PC-9 (cell line): ENCODE measurements at regions of chr2 and their contacts with region 1.

Region 1: DNA sequence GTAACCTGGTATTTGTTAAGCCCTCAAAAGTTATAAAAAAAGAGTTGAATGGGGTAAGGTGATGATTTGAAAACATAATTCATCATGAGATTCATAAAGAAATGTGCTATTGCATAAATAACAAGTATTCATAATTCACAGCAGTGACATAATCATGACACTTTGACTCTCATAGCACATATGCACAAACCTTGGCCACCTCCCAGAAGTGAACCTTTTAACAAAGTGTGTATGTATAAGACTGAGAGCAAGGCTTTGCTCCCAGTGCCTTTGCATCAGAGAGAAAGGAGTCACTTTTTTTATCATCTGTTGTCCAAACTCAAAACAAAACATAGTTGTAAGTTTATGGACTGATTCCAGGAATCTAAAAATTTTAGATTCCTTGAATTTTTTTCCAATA is 15.0 kb upstream of the HTR2B start:
- DNase-seq: no peak
- H3K4me3 ChIP-seq: no peak overlapping the region
- H3K27ac ChIP-seq: no peak overlapping the region
- H3K4me1 ChIP-seq: no peaks in the 10 kb centered on the region
- H3K27me3 ChIP-seq: no peaks in the 10 kb centered on the region
- CTCF ChIP-seq: no peak

Region 2: DNA sequence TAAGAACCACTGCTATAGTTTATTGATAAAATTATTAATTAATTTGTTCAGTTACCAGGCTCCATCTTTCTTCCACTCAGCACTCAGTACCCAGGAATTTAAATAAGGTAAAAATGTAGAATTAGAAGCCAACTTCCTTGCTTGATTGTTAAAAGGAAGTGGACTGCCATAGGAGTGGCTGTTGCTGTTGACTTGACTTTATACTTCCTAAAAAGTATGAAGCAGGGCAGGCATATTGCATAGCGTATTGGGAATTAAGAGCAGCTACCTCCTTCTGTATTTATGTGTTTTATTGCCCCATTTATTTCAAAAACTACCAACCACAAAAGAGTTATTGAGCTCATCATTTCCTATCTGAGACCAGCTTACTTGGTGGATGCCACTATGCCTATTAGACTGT is 55.2 kb before region 1 on chr2:
- CTCF ChIA-PET with region 1: no interaction called
- POLR2A ChIA-PET with region 1: no interaction called
- intact Hi-C with region 1: no loop called
- DNase-seq: no peak
- H3K4me3 ChIP-seq: no peak overlapping the region
- H3K27ac ChIP-seq: no peak overlapping the region
- H3K4me1 ChIP-seq: no peaks in the 10 kb centered on the region
- H3K27me3 ChIP-seq: no peaks in the 10 kb centered on the region
- CTCF ChIP-seq: no peak

Region 3: GRCh38 chr2:231152800-231153557 is 13.2 kb after region 1 on chr2:
- CTCF ChIA-PET with region 1: interaction called, 13 read pairs
- POLR2A ChIA-PET with region 1: no interaction called
- intact Hi-C with region 1: no loop called
- DNase-seq: no peak
- H3K4me3 ChIP-seq: no peak overlapping the region
- H3K27ac ChIP-seq: no peak overlapping the region
- H3K4me1 ChIP-seq: no peaks in the 10 kb centered on the region
- H3K27me3 ChIP-seq: no peaks in the 10 kb centered on the region
- CTCF ChIP-seq: no peak